Caco-2 (cell line): ENCODE measurements at regions of chr7 and their contacts with region 1.

Region 1: GRCh38 chr7:8319115-8319908 is 57.3 kb upstream of the ICA1 start:
- DNase-seq: no peak
- H3K4me3 ChIP-seq: no peak overlapping the region
- H3K4me3 Mint-ChIP-seq: no peak overlapping the region
- H3K27ac Mint-ChIP-seq: no peak overlapping the region
- H3K4me1 ChIP-seq: peaks cover 22% of the 10 kb centered on the region
- H3K4me1 Mint-ChIP-seq: peaks cover 14% of the 10 kb centered on the region
- H3K27me3 ChIP-seq: no peaks in the 10 kb centered on the region
- H3K27me3 Mint-ChIP-seq: no peaks in the 10 kb centered on the region
- CTCF ChIP-seq: no peak

Region 2: GRCh38 chr7:8274589-8274988 is 44.7 kb before region 1 on chr7:
- CTCF ChIA-PET with region 1: no interaction called
- POLR2A ChIA-PET with region 1: no interaction called
- intact Hi-C with region 1: no loop called
- DNase-seq: no peak
- H3K4me3 ChIP-seq: no peak overlapping the region
- H3K4me3 Mint-ChIP-seq: no peak overlapping the region
- H3K27ac Mint-ChIP-seq: no peak overlapping the region
- H3K4me1 ChIP-seq: no peaks in the 10 kb centered on the region
- H3K4me1 Mint-ChIP-seq: no peaks in the 10 kb centered on the region
- H3K27me3 ChIP-seq: no peaks in the 10 kb centered on the region
- H3K27me3 Mint-ChIP-seq: peaks cover 3% of the 10 kb centered on the region
- CTCF ChIP-seq: no peak

Region 3: GRCh38 chr7:8303904-8304528 is 15.3 kb before region 1 on chr7:
- CTCF ChIA-PET with region 1: no interaction called
- POLR2A ChIA-PET with region 1: no interaction called
- intact Hi-C with region 1: loop called (anchors 2 kb)
- DNase-seq: peak; percentile 77 to 80
- H3K4me3 ChIP-seq: peak overlapping the region; percentile 45
- H3K4me3 Mint-ChIP-seq: peak overlapping the region; percentile 90
- H3K27ac Mint-ChIP-seq: peak overlapping the region; percentile 88
- H3K4me1 ChIP-seq: peaks cover 14% of the 10 kb centered on the region
- H3K4me1 Mint-ChIP-seq: peaks cover 19% of the 10 kb centered on the region
- H3K27me3 ChIP-seq: no peaks in the 10 kb centered on the region
- H3K27me3 Mint-ChIP-seq: no peaks in the 10 kb centered on the region
- CTCF ChIP-seq: peak in 1 of 2 experiments; percentile 16

Region 4: DNA sequence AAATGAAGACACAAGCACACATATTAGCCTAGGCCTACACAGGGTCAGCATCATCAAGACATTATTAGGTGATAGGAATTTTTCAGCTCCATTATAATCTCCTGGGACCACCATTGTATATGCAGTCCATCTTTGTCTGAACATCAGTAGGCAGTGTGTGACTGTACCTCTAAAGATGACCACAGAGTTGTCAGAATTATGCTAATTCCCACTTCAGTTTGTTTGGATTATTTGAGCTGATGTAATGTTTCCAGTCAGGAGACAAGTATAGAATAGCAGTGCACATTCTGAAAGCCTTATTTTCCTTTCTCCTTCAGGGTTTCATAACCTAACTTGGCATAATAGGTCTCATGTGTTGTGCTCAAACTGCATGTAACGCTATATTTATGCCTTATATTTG is 420.5 kb after region 1 on chr7:
- CTCF ChIA-PET with region 1: no interaction called
- POLR2A ChIA-PET with region 1: no interaction called
- intact Hi-C with region 1: no loop called
- DNase-seq: no peak
- H3K4me3 ChIP-seq: no peak overlapping the region
- H3K4me3 Mint-ChIP-seq: no peak overlapping the region
- H3K27ac Mint-ChIP-seq: no peak overlapping the region
- H3K4me1 ChIP-seq: peaks cover 5% of the 10 kb centered on the region; the same call in 1 of the 2 replicates
- H3K4me1 Mint-ChIP-seq: no peaks in the 10 kb centered on the region
- H3K27me3 ChIP-seq: no peaks in the 10 kb centered on the region
- H3K27me3 Mint-ChIP-seq: peaks cover 7% of the 10 kb centered on the region
- CTCF ChIP-seq: no peak